Posterior vena cava (tissue), 2 donors: ENCODE measurements at regions of chr19 and their contacts with region 1.

Region 1: GRCh38 chr19:8108560-8109445 is 40.6 kb downstream of the FBN3 start:
- DNase-seq: peak; percentile 58

Region 2: DNA sequence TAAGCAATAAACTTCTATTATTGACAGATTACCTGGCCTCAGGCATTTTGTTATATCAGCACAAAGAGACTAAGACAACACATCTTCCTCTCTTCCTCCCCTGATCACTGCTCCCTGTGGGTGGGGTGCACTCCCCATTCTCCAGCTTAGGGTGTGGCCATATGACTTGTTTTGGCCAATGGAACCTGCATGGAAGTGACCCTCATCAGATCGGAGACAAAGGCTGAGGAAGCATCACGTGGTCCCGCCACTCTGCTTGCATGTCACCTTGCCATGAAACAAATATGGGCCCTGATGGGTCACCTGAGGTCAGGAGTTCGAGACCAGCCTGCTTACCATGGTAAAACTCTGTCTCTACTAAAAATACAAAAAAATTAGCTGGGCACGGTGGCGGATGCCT is 70.0 kb before region 1 on chr19:
- intact Hi-C with region 1: loop called in 1 of 2 experiments (anchors 1 kb)
- DNase-seq: no peak